IMR-90 (cell line): ENCODE measurements at regions of chr1 and their contacts with region 1.

Region 1: GRCh38 chr1:107662971-107663370 is 302.0 kb downstream of the VAV3 start:
- DNase-seq: no peak
- ATAC-seq: no peak
- H3K4me3 ChIP-seq: no peak overlapping the region
- H3K27ac ChIP-seq: no peak overlapping the region
- H3K4me1 ChIP-seq: no peaks in the 10 kb centered on the region
- H3K27me3 ChIP-seq: no peaks in the 10 kb centered on the region
- CTCF ChIP-seq: no peak
- POLR2A ChIP-seq: no peak
- RAD21 ChIP-seq: no peak

Region 2: DNA sequence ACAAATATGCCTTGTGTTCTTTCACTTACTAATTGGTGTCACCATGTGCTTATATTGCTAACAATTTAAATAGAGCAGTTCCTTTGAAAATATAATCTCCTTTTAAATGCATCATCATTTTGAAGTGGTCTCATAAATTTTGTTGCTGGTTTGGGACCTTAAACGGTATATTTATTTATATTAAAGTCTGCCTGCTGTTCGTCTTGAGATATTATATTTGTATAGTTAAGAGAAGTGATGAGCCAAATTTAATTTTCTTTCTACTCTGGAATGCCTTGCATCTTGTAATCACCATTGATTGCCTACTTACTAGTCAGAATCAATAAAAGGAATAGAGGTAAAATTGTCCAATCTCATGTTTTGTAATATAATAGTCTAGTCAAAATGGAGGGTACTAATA is 430.5 kb before region 1 on chr1:
- CTCF ChIA-PET with region 1: no interaction called
- POLR2A ChIA-PET with region 1: no interaction called
- dilution Hi-C with region 1: no loop called
- in situ Hi-C with region 1: no loop called
- intact Hi-C with region 1: no loop called
- DNase-seq: no peak
- ATAC-seq: no peak
- H3K4me3 ChIP-seq: no peak overlapping the region
- H3K27ac ChIP-seq: no peak overlapping the region
- H3K4me1 ChIP-seq: no peaks in the 10 kb centered on the region
- H3K27me3 ChIP-seq: no peaks in the 10 kb centered on the region
- CTCF ChIP-seq: no peak
- POLR2A ChIP-seq: no peak
- RAD21 ChIP-seq: no peak

Region 3: GRCh38 chr1:107640207-107640606 is 22.8 kb before region 1 on chr1:
- CTCF ChIA-PET with region 1: interaction called, 13 read pairs
- POLR2A ChIA-PET with region 1: no interaction called
- dilution Hi-C with region 1: no loop called
- in situ Hi-C with region 1: no loop called
- intact Hi-C with region 1: loop called (anchors 1 kb)
- DNase-seq: no peak
- ATAC-seq: no peak
- H3K4me3 ChIP-seq: no peak overlapping the region
- H3K27ac ChIP-seq: no peak overlapping the region
- H3K4me1 ChIP-seq: no peaks in the 10 kb centered on the region
- H3K27me3 ChIP-seq: no peaks in the 10 kb centered on the region
- CTCF ChIP-seq: no peak
- POLR2A ChIP-seq: no peak
- RAD21 ChIP-seq: no peak

Region 4: DNA sequence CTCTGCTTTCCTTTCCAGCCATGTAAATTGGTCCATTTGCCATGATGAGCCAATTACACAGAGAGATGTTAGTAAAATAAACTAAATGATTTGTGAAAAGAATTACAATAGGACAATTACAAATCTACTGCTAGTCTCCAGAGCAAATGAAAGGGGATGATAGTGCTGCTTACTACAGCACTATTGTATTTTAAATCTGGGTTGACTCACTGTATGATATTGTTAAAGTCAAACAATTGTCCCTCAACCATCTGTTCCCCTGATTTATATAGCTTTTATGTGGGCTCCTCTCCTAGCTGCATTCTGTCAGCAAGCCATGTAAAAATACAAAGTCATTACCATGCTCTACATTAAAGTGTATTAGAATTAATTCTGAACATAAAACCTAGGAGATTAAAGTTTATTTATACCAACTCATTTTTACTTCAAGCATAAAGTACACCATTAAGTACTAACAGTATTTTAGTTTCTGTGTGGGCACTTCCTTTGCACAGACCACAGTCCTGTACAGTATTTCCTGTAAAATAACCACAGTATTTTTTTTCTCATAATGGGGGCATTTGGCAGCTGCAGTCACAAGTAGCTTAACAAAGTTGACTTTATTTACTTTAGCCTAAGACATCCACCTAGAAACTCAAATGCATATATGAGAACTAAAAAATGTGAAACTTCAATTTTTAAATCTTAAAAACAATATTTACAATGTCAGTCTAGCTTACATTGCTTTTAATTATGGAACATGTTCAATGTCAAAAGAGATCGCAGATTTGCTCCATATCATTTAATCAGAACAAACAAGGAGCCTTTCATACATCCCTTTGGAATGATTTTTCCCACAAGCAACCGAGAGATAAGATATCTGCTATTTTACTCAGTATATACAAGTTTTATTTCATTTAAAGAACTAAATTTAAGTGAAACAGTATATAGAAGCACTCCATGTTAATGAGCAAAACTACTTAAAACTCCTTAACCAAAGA is 166.4 kb after region 1 on chr1:
- CTCF ChIA-PET with region 1: no interaction called
- POLR2A ChIA-PET with region 1: no interaction called
- dilution Hi-C with region 1: no loop called
- in situ Hi-C with region 1: no loop called
- intact Hi-C with region 1: no loop called
- DNase-seq: no peak
- ATAC-seq: no peak
- H3K4me3 ChIP-seq: no peak overlapping the region
- H3K27ac ChIP-seq: no peak overlapping the region
- H3K4me1 ChIP-seq: no peaks in the 10 kb centered on the region
- H3K27me3 ChIP-seq: no peaks in the 10 kb centered on the region
- CTCF ChIP-seq: no peak
- POLR2A ChIP-seq: no peak
- RAD21 ChIP-seq: no peak

Region 5: DNA sequence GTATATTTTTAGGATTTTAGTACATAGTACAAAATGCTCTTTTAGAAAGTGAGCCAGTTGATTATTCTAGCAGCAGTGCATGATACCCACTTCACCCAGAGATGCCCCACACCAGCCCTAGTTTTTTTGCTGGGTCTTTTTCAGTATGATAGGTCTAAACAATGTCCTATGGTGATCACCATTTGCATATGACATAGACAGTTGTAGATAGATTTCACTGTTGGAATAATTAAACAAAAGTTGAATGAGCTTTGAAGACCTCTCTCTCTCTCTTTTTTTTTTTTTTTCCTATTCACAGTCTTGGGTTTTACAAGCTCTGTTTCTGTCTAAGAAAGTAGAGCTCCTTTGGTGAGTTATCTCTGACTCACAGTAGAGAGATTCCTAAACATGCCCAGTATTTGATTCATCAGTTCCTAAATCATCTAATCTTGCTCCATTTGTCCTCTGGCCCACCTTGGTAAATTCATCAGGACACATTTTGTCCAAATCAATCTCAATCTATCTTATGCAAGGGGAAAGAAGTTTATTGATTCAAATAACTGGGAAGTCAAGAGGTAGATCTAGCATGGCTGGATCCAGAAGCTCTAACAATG is 346.7 kb after region 1 on chr1:
- CTCF ChIA-PET with region 1: no interaction called
- POLR2A ChIA-PET with region 1: no interaction called
- dilution Hi-C with region 1: no loop called
- in situ Hi-C with region 1: no loop called
- intact Hi-C with region 1: no loop called
- DNase-seq: peak; percentile 11
- ATAC-seq: no peak
- H3K4me3 ChIP-seq: no peak overlapping the region
- H3K27ac ChIP-seq: no peak overlapping the region
- H3K4me1 ChIP-seq: no peaks in the 10 kb centered on the region
- H3K27me3 ChIP-seq: no peaks in the 10 kb centered on the region
- CTCF ChIP-seq: no peak
- POLR2A ChIP-seq: no peak
- RAD21 ChIP-seq: no peak